ENCODE measurements at regions of chr3 and their contacts with region 1.

Region 1: GRCh38 chr3:189961525-189962161 is 159.1 kb downstream of the P3H2 start:
- DNase-seq: peak; percentile 75
- CTCF ChIP-seq: peak; percentile 85

Region 2: GRCh38 chr3:189270248-189270832 is 691.3 kb before region 1 on chr3:
- CTCF ChIA-PET with region 1: interaction called, 17 read pairs
- POLR2A ChIA-PET with region 1: no interaction called
- DNase-seq: peak; percentile 39
- CTCF ChIP-seq: peak; percentile 65

Region 3: GRCh38 chr3:189947948-189948723 is 13.5 kb before region 1 on chr3:
- CTCF ChIA-PET with region 1: interaction called, 36 read pairs
- POLR2A ChIA-PET with region 1: no interaction called
- DNase-seq: peak; percentile 24
- CTCF ChIP-seq: peak; percentile 29

Region 4: GRCh38 chr3:190192739-190193138 is 231.1 kb after region 1 on chr3:
- CTCF ChIA-PET with region 1: interaction called, 13 read pairs
- POLR2A ChIA-PET with region 1: no interaction called
- DNase-seq: no peak
- CTCF ChIP-seq: no peak

Region 5: DNA sequence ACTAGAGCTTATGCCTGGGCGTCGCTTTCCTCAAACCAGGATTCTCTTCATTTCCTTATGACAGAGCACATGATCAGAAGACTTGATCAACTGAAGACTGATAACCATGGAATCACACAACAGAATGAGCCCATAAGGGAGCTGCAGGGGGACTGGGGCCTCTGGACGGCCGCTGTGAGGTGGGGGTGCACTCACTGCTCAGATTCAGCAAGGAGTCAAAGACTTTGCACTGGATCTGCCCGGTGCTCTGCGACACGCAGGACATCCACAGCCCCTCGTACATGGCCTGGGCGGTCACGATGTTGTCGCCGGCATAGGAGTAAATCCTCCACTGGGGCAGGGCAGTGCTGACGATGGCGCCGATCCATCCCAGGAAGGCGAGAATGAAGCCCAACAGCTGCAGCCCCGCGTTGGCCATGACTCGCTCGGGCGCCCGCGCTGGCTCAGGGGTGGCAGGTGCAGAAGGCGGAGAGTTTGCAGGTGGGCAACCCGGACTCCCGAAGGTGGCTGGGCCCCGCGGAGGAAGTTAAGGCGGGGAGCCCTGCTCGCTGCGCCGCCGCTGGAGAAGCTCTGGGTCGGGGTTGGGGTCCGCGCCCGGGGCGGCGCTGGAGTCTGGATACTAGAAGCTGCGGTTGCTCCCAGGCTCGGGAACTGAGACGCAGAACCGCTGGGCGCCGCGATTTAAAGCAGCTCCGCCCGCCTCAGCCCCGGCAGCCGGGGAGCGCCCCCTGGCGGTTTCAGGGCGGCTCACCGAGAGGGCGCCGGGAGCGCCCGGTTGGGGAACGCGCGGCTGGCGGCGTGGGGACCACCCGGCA is 360.4 kb after region 1 on chr3 and contains the start of gene CLDN1:
- CTCF ChIA-PET with region 1: interaction called, 45 read pairs
- POLR2A ChIA-PET with region 1: no interaction called
- DNase-seq: peak; percentile 83
- CTCF ChIP-seq: peak; percentile 86

Region 6: GRCh38 chr3:190424478-190425439 is 463.1 kb after region 1 on chr3:
- CTCF ChIA-PET with region 1: interaction called, 56 read pairs
- POLR2A ChIA-PET with region 1: no interaction called
- DNase-seq: peak; percentile 35
- CTCF ChIP-seq: peak; percentile 50

Measured in GM10248 (cell line).